ENCODE measurements at regions of chr10 and their contacts with region 1.

Region 1: DNA sequence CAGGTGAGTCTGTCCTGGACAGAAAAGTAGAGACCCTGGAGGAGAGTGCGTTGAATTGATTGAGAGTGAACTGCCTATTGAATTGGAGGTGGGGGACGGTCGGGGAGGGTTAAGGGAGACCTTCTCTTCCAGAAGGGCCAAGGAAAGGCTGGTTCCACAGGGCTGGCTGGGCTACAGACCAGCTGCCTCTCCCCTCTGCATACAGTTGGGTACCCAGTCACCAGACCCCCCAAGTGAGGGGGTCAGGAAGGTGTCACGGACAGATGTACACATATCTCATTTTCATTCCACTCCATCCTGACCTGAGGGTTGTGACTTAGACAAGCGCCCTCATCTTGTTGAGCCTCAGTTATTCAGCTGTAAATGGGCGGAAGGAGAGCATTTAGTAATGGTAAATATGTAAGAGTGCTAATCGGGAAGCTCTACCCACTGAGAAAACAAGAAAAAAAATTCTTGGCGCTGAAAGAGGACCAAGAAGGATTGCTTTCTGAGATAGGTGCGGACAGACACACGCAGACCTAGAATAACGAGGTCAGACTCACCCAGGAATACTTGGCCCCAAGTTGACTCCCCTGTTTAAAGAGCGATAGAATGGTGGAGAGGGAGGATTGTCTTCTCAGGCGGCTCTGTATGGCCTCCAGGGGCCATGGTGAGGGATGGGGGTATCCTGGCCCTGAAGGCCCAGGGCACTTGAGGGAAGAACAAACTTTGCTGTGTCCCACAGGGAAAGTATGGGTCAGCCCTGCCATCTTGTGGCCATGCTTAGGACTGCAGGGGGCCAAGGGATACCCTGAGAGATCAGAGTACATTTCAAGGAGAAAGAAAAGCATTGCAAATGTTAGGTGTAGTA is 7.2 kb upstream of the MBL2 start:
- DNase-seq: peak; percentile 87
- H3K4me3 Mint-ChIP-seq: no peak overlapping the region
- H3K27ac Mint-ChIP-seq: no peak overlapping the region
- H3K4me1 Mint-ChIP-seq: no peaks in the 10 kb centered on the region
- H3K27me3 Mint-ChIP-seq: peaks cover 15% of the 10 kb centered on the region
- CTCF ChIP-seq: peak; percentile 86

Region 2: DNA sequence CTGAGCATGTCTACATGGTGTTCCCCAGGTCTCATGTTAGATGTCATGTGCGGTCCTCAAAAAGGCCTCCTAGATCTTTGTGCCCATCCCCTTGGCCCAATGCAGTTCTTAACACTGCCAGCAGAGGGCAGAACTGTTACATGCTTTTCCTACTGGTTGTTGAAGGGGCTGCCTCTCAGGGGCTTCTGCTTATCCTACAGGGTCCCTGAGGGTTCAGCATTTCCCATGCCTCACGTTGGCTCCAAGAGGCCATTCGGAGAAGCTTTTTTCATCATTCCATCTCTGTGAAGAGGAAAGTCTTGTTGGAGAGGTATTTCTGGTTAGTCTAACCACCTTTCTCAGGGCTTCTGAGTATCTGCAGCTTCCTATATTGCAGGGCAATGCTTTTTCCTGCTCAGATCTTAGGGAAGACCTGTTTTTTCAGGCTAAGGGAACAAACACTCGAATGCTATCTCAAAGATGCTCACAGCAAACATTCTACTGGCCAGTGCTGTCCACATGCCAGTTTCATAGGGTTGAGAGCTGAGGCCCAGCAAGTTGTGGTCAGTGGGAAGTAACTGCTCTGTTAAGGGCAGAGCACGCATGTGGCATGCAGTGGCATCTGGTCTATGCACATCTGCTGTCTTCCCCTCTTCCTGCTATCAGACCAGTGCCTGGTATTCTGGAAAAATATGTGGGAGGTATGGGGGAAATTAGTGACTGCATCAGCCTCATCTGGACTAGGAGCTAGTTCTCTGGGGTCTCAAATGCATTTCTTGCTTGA is 38.7 kb before region 1 on chr10:
- CTCF ChIA-PET with region 1: interaction called, 6 read pairs
- intact Hi-C with region 1: loop called (anchors 1 kb)
- DNase-seq: peak; percentile 53
- H3K4me3 Mint-ChIP-seq: no peak overlapping the region
- H3K27ac Mint-ChIP-seq: no peak overlapping the region
- H3K4me1 Mint-ChIP-seq: no peaks in the 10 kb centered on the region
- H3K27me3 Mint-ChIP-seq: no peaks in the 10 kb centered on the region
- CTCF ChIP-seq: peak; percentile 95

Region 3: DNA sequence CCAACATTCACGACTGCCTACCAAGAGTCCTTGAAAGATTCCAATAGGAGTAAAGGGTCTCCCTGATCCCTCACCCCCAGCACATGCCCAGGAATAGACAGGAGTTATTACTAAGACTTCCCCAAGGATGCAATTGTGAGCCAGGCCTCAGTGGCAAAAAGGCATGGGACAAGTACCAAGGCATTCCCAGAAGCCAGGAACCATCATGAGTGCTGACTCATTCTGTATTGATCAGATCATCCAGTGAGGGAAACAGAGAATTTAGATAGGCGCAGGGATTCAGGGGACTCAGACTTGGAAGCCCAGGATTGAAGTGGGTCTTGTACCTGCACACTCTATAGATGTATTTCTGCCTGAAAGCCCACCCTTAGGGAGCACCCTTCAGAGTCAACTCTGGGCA is 28.4 kb before region 1 on chr10:
- CTCF ChIA-PET with region 1: no interaction called
- intact Hi-C with region 1: no loop called
- DNase-seq: no peak
- H3K4me3 Mint-ChIP-seq: no peak overlapping the region
- H3K27ac Mint-ChIP-seq: no peak overlapping the region
- H3K4me1 Mint-ChIP-seq: peaks cover 8% of the 10 kb centered on the region
- H3K27me3 Mint-ChIP-seq: no peaks in the 10 kb centered on the region
- CTCF ChIP-seq: no peak